Activated B cell treated with CpG ODN at 0.5 μM for 24 hours (primary cell): ENCODE measurements at regions of chr9 and their contacts with region 1.

Region 1: DNA sequence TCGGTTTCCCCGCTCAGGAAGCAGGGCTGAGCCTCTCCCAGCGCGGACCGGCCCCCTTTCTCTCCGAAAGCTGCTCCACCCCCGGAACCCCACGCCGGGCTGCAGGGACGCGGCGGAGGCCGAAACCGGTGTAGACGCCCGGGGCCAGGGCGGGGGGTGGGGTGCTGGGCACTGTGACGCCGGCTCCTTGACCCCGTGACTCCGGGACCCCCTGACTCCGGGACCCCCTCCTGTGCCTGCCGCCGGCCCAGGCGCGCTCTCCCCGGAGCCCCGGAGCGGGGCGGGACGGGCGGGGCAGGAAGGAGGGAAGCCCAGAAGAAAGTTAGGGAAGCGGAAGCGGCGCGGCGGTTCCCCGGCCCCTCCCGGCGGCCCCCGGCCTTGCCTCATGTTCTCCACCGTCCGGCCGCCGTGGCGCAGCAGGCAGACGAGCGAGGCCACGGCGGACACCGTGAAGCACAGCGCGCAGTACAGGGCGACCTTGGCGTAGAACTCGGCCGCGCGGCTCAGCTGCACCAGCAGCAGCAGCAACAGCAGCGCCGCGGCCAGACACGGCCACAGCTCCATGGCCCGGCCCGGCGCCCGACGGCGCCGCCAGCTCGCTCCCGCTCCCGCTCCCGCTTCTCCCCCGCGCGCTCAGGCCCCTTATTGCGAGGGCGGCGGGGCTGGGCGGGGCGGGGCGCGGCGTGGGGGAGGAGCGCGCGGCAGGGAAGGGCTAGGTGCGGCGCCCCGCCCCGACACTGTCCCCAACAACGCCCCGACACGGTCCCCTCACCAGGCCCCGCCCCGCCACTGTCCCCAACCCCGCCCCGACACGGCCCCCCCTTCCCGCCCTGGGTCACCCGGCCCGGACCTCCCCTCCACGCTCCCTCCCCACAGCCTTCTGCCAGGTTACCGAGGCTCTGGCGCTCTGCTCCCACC is at the start of gene AGPAT2:
- DNase-seq: peak; percentile 64
- ATAC-seq: peak; percentile 94
- H3K4me3 Mint-ChIP-seq: peak within 1 kb of the TSS; percentile 78
- H3K27ac Mint-ChIP-seq: peak within 1 kb of the TSS; percentile 59
- H3K4me1 Mint-ChIP-seq: peaks cover 10% of the 10 kb centered on the region
- H3K27me3 Mint-ChIP-seq: no peaks in the 10 kb centered on the region
- CTCF ChIP-seq: no peak
- total RNA-seq, gene AGPAT2: 16.6 and 17.1 TPM in 2 replicates

Region 2: DNA sequence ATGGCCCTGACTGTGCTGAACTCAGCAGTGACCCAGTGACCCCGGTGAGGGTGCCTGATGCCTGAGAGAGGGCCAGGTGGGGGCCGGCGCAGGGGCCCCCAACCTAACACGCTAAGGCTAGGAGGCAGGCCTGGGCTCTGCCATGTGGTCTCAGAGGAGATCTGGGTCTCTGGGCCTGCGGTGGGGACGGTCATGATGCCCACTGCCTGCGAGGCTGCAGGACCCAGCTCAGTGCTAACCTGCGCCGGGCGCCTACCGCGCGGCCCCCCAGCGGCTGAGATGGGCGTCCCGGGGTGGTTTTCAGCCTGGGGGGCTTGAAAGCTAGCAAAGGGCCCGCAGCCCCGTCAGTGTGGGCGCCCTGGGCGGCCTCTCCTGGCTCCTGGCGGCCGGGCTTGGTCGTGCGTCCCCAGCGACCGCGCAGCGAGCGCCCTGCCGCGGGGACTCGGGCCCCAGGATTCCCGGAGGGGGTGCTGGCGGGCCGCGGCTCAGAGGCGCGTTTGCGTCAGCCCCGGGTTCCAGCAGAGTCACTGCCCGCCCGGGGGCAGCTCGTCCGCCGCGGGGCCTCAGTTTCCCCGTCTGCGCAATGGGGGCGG is 21.8 kb before region 1 on chr9:
- CTCF ChIA-PET with region 1: no interaction called
- POLR2A ChIA-PET with region 1: no interaction called
- intact Hi-C with region 1: loop called (anchors 2 kb)
- DNase-seq: no peak
- ATAC-seq: peak; percentile 47
- H3K4me3 Mint-ChIP-seq: peak overlapping the region; percentile 73
- H3K27ac Mint-ChIP-seq: no peak overlapping the region
- H3K4me1 Mint-ChIP-seq: peaks cover 6% of the 10 kb centered on the region
- H3K27me3 Mint-ChIP-seq: peaks cover 16% of the 10 kb centered on the region
- CTCF ChIP-seq: no peak

Region 3: DNA sequence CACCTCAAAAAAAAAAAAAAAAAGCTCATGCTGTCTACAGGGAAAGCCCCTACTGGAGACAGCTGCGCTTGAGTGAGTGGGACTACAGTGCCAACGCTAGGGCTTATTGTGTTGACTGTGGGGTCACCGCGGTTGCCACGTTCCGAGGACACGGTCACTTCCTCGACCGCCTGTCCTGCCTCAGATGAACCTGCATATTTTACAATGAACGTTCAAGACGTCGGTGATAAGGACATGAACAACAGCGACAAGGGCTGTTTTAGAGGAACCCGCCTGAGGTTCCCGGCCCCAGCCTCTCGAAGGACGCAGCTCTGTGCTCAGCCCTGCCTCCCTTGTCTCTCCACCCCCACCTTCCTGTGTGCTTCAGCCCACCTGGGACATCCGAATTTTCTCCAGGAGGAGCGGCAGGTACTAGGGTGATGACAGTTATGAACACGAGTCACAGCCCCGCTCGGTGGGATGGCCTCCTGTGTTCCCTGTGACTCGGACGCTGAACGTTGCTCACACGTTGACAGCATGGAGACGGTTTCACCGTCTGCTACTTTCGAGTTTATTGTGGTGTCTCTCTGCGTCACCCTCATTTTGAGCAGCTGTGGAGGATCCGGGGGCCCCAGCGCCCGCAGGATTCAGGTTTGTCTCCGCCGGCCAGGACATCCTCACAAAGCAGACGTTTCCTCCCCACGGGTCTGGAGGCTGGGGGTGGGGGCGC is 14.1 kb after region 1 on chr9:
- CTCF ChIA-PET with region 1: no interaction called
- POLR2A ChIA-PET with region 1: interaction called, 15 read pairs
- intact Hi-C with region 1: loop called (anchors 2 kb)
- DNase-seq: no peak
- ATAC-seq: peak; percentile 81
- H3K4me3 Mint-ChIP-seq: peak overlapping the region; percentile 78
- H3K27ac Mint-ChIP-seq: peak overlapping the region; percentile 80
- H3K4me1 Mint-ChIP-seq: peaks cover 48% of the 10 kb centered on the region
- H3K27me3 Mint-ChIP-seq: peaks cover 16% of the 10 kb centered on the region
- CTCF ChIP-seq: no peak

Region 4: DNA sequence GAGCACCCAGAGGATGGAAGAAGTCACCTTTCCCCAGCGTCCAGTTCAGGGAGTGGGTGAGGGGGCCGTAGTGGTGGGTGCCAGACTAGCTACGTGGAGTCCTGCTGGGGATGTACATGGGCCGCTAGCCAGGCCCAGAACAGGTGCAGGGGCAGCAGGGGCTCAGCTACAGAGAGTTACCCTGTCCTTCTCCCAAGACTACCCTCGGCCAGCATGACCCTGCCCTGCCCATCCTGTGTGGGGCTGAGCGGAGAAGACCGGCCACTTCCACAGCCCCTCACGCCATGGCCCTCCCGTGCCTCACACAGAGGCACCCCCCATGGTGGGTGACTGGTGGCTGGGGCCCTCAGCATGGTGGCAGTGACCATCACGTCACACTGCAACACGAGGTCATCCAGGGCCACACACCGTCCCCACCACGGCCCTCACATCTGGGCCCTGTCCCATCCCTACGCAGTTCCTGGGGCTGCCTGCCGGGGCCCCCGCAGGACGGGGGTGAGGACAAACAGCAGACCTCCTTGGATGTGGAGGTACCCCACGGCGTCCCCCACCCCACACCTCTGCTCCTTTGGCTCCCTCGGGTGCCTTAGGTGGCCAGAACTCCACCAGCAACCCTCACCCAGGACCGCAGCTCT is 428.5 kb after region 1 on chr9:
- CTCF ChIA-PET with region 1: no interaction called
- POLR2A ChIA-PET with region 1: no interaction called
- intact Hi-C with region 1: no loop called
- DNase-seq: no peak
- ATAC-seq: no peak
- H3K4me3 Mint-ChIP-seq: peak overlapping the region; percentile 64
- H3K27ac Mint-ChIP-seq: no peak overlapping the region
- H3K4me1 Mint-ChIP-seq: peaks cover 26% of the 10 kb centered on the region
- H3K27me3 Mint-ChIP-seq: no peaks in the 10 kb centered on the region
- CTCF ChIP-seq: no peak